ENCODE measurements at regions of chr5 and their contacts with region 1.

Region 1: DNA sequence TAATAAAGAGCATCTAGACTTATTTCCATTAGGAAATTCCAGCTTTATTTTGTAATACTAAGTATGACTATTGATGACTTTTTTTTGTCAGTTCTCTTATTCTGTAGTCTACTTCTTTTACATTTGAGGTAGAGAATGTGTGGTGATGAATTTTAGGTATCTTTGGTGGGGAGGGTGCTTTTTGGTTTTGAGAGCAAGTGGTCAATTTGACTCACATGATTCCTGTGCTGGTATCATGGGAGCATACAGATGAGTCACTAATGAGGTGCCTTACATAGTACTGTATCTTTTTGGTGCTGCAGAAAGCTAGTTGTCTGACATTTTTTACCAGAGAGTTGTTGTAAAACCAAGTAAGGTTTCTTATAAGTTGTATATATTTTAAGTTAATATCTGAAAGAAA is 35.3 kb downstream of the ERBIN start:
- DNase-seq: peak; percentile 27
- H3K4me3 Mint-ChIP-seq: no peak overlapping the region
- H3K27ac Mint-ChIP-seq: no peak overlapping the region
- H3K4me1 Mint-ChIP-seq: peaks cover 61% of the 10 kb centered on the region
- H3K27me3 Mint-ChIP-seq: no peaks in the 10 kb centered on the region

Region 2: GRCh38 chr5:66002415-66002814 is 40.8 kb after region 1 on chr5:
- CTCF ChIA-PET with region 1: no interaction called
- intact Hi-C with region 1: loop called (anchors 2 kb)
- DNase-seq: no peak
- H3K4me3 Mint-ChIP-seq: no peak overlapping the region
- H3K27ac Mint-ChIP-seq: no peak overlapping the region
- H3K4me1 Mint-ChIP-seq: peaks cover 33% of the 10 kb centered on the region
- H3K27me3 Mint-ChIP-seq: no peaks in the 10 kb centered on the region

Region 3: GRCh38 chr5:66041627-66042026 is 80.0 kb after region 1 on chr5:
- CTCF ChIA-PET with region 1: no interaction called
- intact Hi-C with region 1: no loop called
- DNase-seq: no peak
- H3K4me3 Mint-ChIP-seq: no peak overlapping the region
- H3K27ac Mint-ChIP-seq: no peak overlapping the region
- H3K4me1 Mint-ChIP-seq: peaks cover 8% of the 10 kb centered on the region
- H3K27me3 Mint-ChIP-seq: no peaks in the 10 kb centered on the region